ENCODE measurements at regions of chr10 and their contacts with region 1.

Region 1: GRCh38 chr10:88138319-88138848 is 275.0 kb downstream of the PTEN start:
- DNase-seq: no peak
- H3K4me3 Mint-ChIP-seq: peak overlapping the region; percentile 59
- H3K27ac Mint-ChIP-seq: peak overlapping the region; percentile 76
- H3K4me1 Mint-ChIP-seq: peaks cover 29% of the 10 kb centered on the region
- H3K27me3 Mint-ChIP-seq: peaks cover 8% of the 10 kb centered on the region

Region 2: GRCh38 chr10:88125766-88126165 is 12.6 kb before region 1 on chr10:
- intact Hi-C with region 1: loop called (anchors 1 kb)
- DNase-seq: no peak
- H3K4me3 Mint-ChIP-seq: no peak overlapping the region
- H3K27ac Mint-ChIP-seq: no peak overlapping the region
- H3K4me1 Mint-ChIP-seq: peaks cover 7% of the 10 kb centered on the region
- H3K27me3 Mint-ChIP-seq: peaks cover 12% of the 10 kb centered on the region

Region 3: DNA sequence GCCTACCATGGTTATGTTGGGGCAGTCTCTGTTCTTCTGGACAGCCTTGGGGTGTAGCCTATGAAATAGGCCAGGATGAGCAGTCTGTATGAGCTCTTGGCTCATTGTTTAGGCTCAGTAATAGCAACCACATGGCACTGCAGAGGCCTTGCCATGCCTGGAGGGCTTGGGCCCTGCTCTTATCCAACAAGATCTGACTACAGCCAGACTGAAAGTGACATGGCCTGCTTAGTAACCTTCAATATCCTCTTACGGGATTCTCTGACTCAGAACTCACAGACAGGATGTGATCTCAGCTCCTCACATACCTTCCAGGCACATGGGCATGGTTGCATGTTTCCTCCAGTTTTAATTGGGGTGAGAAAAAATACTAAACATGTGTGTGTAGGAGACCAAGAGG is 14.3 kb after region 1 on chr10:
- intact Hi-C with region 1: loop called (anchors 1 kb)
- DNase-seq: peak; percentile 57
- H3K4me3 Mint-ChIP-seq: peak overlapping the region; percentile 54
- H3K27ac Mint-ChIP-seq: peak overlapping the region; percentile 97
- H3K4me1 Mint-ChIP-seq: peaks cover 37% of the 10 kb centered on the region
- H3K27me3 Mint-ChIP-seq: peaks cover 5% of the 10 kb centered on the region

Region 4: DNA sequence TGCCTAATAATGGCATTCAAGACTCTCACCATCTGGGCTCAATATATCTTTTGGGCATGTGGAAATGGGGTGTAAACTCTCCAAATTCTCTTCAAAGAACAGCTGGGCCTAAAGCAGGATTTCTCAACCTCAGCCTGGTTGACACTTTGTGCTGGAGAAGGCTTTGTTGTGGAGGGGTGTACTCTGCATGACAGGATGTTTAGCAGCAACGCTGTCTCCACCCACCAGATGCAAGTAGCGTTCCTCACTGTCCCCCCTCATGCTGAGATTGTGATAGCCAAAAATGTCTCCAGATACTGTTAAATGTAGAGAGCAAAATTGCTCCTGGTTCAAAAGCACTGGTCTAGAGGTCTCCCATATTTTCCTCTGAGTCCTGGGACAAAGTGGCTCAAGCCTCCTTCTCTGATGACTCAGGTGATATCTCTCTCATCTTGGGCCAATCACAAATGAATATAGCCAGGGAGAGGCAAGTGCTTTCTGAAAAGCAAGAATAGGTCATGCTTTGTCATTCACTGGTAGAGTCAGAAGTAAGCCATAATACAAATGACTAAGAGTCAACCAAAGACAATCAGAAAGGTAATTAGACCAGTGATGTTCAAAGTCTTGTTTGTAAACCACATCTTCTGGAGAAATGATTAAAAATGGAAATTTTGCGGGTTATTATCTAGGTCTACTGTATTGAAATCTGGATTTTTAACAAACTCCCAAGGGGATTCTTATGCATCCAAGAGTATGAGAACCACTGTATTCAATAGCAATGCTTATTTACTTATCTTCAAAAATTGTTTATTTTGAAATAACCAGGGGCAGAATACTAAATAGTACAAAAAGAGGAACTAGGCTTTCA is 55.9 kb after region 1 on chr10:
- intact Hi-C with region 1: loop called (anchors 1 kb)
- DNase-seq: peak; percentile 47
- H3K4me3 Mint-ChIP-seq: peak overlapping the region; percentile 43
- H3K27ac Mint-ChIP-seq: peak overlapping the region; percentile 90
- H3K4me1 Mint-ChIP-seq: peaks cover 35% of the 10 kb centered on the region
- H3K27me3 Mint-ChIP-seq: peaks cover 3% of the 10 kb centered on the region

Region 5: GRCh38 chr10:88386821-88387773 is 248.7 kb after region 1 on chr10:
- intact Hi-C with region 1: loop called (anchors 1 kb)
- DNase-seq: no peak
- H3K4me3 Mint-ChIP-seq: no peak overlapping the region
- H3K27ac Mint-ChIP-seq: no peak overlapping the region
- H3K4me1 Mint-ChIP-seq: peaks cover 16% of the 10 kb centered on the region
- H3K27me3 Mint-ChIP-seq: no peaks in the 10 kb centered on the region

Measured in activated T-helper 1 cell treated with anti-CD3 and anti-CD28 coated beads, Interleukin-12 subunit alpha, Interleukin-12 subunit beta, Interleukin-2, Interleukin-4 antibody, amounts not matched to agents 30 ng/mL and 10 ng/mL and 1 ng/mL, durations not matched to agents 14 hours and 24 hours and 36 hours (primary cell).